Naive thymus-derived CD4-positive, alpha-beta T cell (primary cell): ENCODE measurements at regions of chr2 and their contacts with region 1.

Region 1: GRCh38 chr2:36355151-36355889 is at the start of gene CRIM1:
- DNase-seq: peak in 5 of 9 donors; percentile 4 to 72 (median 15)
- ATAC-seq: peak; percentile 58
- H3K4me3 ChIP-seq: peak within 1 kb of the TSS; percentile 62
- H3K4me3 Mint-ChIP-seq: peak within 1 kb of the TSS; percentile 64 to 89 (median 86)
- H3K27ac ChIP-seq: no peak within 1 kb of the TSS
- H3K27ac Mint-ChIP-seq: peak within 1 kb of the TSS in 1 of 9 donors; percentile 4
- H3K4me1 ChIP-seq: peaks cover 9 to 13% of the 10 kb centered on the region in 2 donors
- H3K4me1 Mint-ChIP-seq: peaks cover 19 to 44% (median 28%) of the 10 kb centered on the region in 7 donors
- H3K27me3 ChIP-seq: peaks cover 0 to 7% of the 10 kb centered on the region in 2 donors
- H3K27me3 Mint-ChIP-seq: peaks cover 25 to 65% (median 42%) of the 10 kb centered on the region in 5 donors
- total RNA-seq, gene CRIM1: 0.75 to 7.1 (median 1.2) TPM

Region 2: GRCh38 chr2:35871672-35872071 is 483.6 kb before region 1 on chr2:
- CTCF ChIA-PET with region 1: no interaction called
- POLR2A ChIA-PET with region 1: no interaction called
- intact Hi-C with region 1: loop called in 1 of 2 experiments (anchors 5 kb)
- DNase-seq: no peak
- ATAC-seq: no peak
- H3K4me3 ChIP-seq: no peak overlapping the region
- H3K4me3 Mint-ChIP-seq: no peak overlapping the region
- H3K27ac ChIP-seq: no peak overlapping the region
- H3K27ac Mint-ChIP-seq: no peak overlapping the region
- H3K4me1 ChIP-seq: no peaks in the 10 kb centered on the region
- H3K4me1 Mint-ChIP-seq: no peaks in the 10 kb centered on the region
- H3K27me3 ChIP-seq: no peaks in the 10 kb centered on the region
- H3K27me3 Mint-ChIP-seq: peaks cover 3 to 13% (median 10%) of the 10 kb centered on the region in 5 donors

Region 3: DNA sequence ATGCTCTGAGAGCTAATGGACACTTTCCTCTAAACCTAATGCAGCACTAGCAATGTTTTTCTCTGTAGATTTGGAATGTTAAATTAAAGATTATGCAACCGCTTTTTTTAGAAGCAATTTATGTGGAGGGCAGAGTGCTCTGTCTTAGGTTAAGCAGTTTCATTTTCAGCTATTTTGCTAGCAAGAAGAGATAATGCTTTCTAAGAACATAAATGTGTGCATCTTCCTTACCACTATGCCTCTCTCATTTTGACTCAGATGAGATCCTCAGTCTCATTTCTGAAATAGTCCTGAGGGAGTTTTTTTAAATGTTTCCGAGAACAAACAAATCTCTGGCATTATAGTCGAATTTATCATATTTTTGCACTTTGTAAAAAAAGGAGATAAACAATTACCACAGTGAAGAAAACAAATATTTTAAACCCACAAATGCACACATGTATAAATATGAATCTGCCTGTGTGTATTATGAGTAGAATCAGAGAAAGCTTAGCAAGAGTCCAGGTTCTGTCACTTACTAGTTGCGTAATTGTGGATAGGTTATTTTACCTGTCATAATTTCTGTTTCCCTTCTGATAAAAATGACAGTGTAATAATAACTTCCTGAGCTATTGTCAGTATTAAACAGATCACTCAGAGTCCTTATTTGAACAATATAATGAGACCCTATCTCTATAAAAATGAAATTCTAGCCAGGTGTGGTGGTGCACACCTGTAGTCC is 207.5 kb before region 1 on chr2:
- CTCF ChIA-PET with region 1: no interaction called
- POLR2A ChIA-PET with region 1: no interaction called
- intact Hi-C with region 1: loop called in 1 of 2 experiments (anchors 5 kb)
- DNase-seq: no peak
- ATAC-seq: no peak
- H3K4me3 ChIP-seq: no peak overlapping the region
- H3K4me3 Mint-ChIP-seq: peak overlapping the region in 1 of 10 donors; percentile 67
- H3K27ac ChIP-seq: no peak overlapping the region
- H3K27ac Mint-ChIP-seq: peak overlapping the region in 1 of 9 donors; percentile 21
- H3K4me1 ChIP-seq: no peaks in the 10 kb centered on the region
- H3K4me1 Mint-ChIP-seq: peaks cover 0 to 30% (median 5%) of the 10 kb centered on the region in 7 donors
- H3K27me3 ChIP-seq: no peaks in the 10 kb centered on the region
- H3K27me3 Mint-ChIP-seq: peaks cover 0 to 16% (median 0%) of the 10 kb centered on the region in 5 donors

Region 4: DNA sequence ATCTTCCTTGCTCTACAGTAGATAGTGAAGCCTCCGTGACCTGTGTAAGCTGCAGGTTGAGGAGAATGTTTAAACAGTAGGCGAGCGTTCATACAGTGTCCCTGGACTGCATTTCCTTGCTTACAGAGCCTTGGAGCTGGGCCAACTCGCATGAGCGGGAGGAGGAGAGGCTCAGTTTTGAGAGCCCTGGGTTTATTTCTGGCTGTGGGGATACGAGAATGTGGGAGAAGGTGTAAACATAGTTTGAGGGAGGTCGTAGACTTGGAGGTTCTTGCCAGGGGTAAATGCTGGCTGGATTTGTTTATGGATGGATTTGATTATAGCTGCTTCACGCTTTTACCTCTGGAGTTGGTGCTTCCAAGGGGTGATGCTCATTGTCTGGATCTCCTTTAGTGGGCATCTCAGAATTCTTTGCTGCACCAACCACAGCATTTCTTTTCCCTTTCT is 21.0 kb after region 1 on chr2:
- CTCF ChIA-PET with region 1: no interaction called
- POLR2A ChIA-PET with region 1: no interaction called
- intact Hi-C with region 1: no loop called
- DNase-seq: no peak
- ATAC-seq: peak; percentile 26
- H3K4me3 ChIP-seq: no peak overlapping the region
- H3K4me3 Mint-ChIP-seq: no peak overlapping the region
- H3K27ac ChIP-seq: no peak overlapping the region
- H3K27ac Mint-ChIP-seq: no peak overlapping the region
- H3K4me1 ChIP-seq: no peaks in the 10 kb centered on the region
- H3K4me1 Mint-ChIP-seq: peaks cover 0 to 22% (median 0%) of the 10 kb centered on the region in 7 donors
- H3K27me3 ChIP-seq: no peaks in the 10 kb centered on the region
- H3K27me3 Mint-ChIP-seq: peaks cover 0 to 10% (median 4%) of the 10 kb centered on the region in 5 donors

Region 5: GRCh38 chr2:36507408-36507812 is 152.1 kb after region 1 on chr2:
- CTCF ChIA-PET with region 1: interaction called, 3 read pairs
- POLR2A ChIA-PET with region 1: no interaction called
- intact Hi-C with region 1: loop called (anchors 1 kb)
- DNase-seq: peak in 4 of 9 donors; percentile 10 to 27 (median 16)
- ATAC-seq: peak; percentile 76
- H3K4me3 ChIP-seq: no peak overlapping the region
- H3K4me3 Mint-ChIP-seq: no peak overlapping the region
- H3K27ac ChIP-seq: no peak overlapping the region
- H3K27ac Mint-ChIP-seq: no peak overlapping the region
- H3K4me1 ChIP-seq: no peaks in the 10 kb centered on the region
- H3K4me1 Mint-ChIP-seq: no peaks in the 10 kb centered on the region
- H3K27me3 ChIP-seq: no peaks in the 10 kb centered on the region
- H3K27me3 Mint-ChIP-seq: no peaks in the 10 kb centered on the region

Region 6: DNA sequence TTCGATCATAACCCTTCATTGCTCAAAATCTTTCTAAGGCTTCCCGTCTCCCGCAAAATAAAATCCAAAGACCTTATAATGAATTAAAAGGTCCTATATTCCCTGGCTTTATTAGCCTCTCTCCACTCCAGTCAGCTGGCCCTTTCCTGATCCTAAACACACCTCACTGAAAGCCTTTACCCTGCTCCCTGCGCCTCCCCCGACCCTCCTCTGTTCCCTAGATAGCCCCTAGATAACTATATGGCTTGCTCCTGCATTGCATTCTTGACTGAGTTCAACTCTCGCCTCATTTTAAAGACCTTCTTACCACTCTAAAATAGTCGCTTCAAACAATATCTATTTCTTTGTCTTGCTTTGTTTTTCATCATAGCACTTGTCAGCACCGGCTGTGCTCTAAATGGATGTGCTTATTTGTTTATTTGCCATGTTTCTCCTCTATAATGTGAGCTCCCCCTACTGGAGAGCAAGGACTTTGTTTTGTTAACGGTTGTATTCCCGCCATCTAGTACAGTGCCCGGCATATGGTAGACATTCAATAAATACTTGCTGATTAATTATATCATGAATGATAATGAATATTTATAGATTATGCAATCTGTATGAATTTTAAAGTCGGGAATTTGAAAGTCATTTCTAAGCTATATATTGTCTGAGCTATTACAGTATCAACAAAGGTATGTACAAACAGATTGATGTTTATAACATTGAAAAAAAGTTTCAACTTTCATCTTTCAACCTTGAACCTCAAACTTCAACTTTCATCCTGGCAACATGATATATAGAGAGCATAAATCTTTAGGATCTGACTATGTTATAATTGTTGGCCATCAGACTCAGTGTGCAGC is 308.8 kb after region 1 on chr2:
- CTCF ChIA-PET with region 1: interaction called, 9 read pairs
- POLR2A ChIA-PET with region 1: no interaction called
- intact Hi-C with region 1: loop called (anchors 1 to 2 kb)
- DNase-seq: peak in 5 of 9 donors; percentile 26 to 48 (median 30)
- ATAC-seq: peak; percentile 75
- H3K4me3 ChIP-seq: no peak overlapping the region
- H3K4me3 Mint-ChIP-seq: no peak overlapping the region
- H3K27ac ChIP-seq: no peak overlapping the region
- H3K27ac Mint-ChIP-seq: no peak overlapping the region
- H3K4me1 ChIP-seq: no peaks in the 10 kb centered on the region
- H3K4me1 Mint-ChIP-seq: no peaks in the 10 kb centered on the region
- H3K27me3 ChIP-seq: peaks cover 0 to 11% of the 10 kb centered on the region in 2 donors
- H3K27me3 Mint-ChIP-seq: peaks cover 3 to 17% (median 12%) of the 10 kb centered on the region in 5 donors

Region 7: DNA sequence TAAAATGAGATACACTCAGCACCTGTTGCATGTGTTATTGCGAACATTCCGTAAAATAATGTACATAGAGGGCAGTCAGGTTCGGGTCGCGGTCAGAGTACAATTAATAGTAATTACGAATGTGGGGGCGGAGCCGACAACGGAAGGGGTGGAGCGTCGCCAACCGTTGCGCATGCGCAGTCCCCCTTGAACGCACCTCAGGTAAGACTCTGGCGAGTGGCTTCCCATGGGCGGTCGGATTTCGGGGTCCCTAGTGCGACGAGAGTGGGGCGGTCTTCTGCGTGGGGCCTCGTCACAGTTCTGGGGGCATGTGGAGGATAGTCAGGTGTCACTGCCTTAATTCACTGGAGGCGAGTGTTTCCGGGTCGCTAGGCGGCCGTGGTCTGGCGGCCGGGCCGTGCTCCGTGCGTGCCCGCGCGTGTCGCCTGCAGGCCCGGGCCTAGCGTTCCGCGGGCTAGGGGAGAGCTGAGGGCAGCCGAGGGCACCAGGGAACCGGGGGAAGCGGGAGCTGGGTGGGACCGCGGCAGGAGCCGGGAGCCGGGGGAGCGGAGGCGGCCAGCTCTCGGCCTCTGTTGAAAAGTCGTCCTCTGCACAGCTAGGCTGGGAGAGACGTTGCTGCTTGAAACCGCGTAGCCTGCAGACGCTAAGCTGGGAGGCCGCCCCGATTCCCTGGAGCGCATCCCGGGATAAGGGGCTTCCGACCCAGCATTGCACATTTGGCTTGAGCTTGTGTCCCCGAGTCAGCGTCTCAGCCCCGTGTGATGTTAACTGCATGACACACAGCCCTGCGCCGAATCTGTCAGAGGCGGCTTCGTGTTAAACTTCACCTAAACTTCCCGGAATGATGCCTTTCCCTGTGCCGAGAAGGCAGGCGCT is 841.2 kb after region 1 on chr2 and contains the start of gene CEBPZOS:
- CTCF ChIA-PET with region 1: no interaction called
- POLR2A ChIA-PET with region 1: no interaction called
- intact Hi-C with region 1: no loop called
- DNase-seq: peak; percentile 82 to 91 (median 88)
- ATAC-seq: peak; percentile 92
- H3K4me3 ChIP-seq: peak within 1 kb of the TSS; percentile 90
- H3K4me3 Mint-ChIP-seq: peak within 1 kb of the TSS; percentile 93 to 100 (median 99)
- H3K27ac ChIP-seq: peak within 1 kb of the TSS; percentile 82
- H3K27ac Mint-ChIP-seq: peak within 1 kb of the TSS; percentile 93 to 99 (median 99)
- H3K4me1 ChIP-seq: peaks cover 10 to 15% of the 10 kb centered on the region in 2 donors
- H3K4me1 Mint-ChIP-seq: peaks cover 14 to 47% (median 34%) of the 10 kb centered on the region in 7 donors
- H3K27me3 ChIP-seq: no peaks in the 10 kb centered on the region
- H3K27me3 Mint-ChIP-seq: peaks cover 0 to 5% (median 0%) of the 10 kb centered on the region in 5 donors
- total RNA-seq, gene CEBPZOS: 26.9 to 40.7 (median 40.4) TPM